ENCODE measurements at regions of chr7 and their contacts with region 1.

Region 1: GRCh38 chr7:30276203-30276900 is 8.0 kb upstream of the ZNRF2 start:
- DNase-seq: no peak
- ATAC-seq: peak; percentile 46
- H3K4me3 ChIP-seq: no peak overlapping the region
- H3K27ac ChIP-seq: no peak overlapping the region
- H3K4me1 ChIP-seq: no peaks in the 10 kb centered on the region
- H3K27me3 ChIP-seq: no peaks in the 10 kb centered on the region

Region 2: GRCh38 chr7:30252885-30253795 is 23.2 kb before region 1 on chr7:
- intact Hi-C with region 1: no loop called
- DNase-seq: peak; percentile 78 to 87
- ATAC-seq: peak; percentile 42
- H3K4me3 ChIP-seq: no peak overlapping the region
- H3K27ac ChIP-seq: no peak overlapping the region
- H3K4me1 ChIP-seq: peaks cover 0 to 3% of the 10 kb centered on the region in 2 donors
- H3K27me3 ChIP-seq: no peaks in the 10 kb centered on the region

Region 3: GRCh38 chr7:30412810-30413504 is 136.6 kb after region 1 on chr7:
- intact Hi-C with region 1: loop called in 1 of 2 experiments (anchors 5 kb)
- DNase-seq: no peak
- ATAC-seq: peak; percentile 83
- H3K4me3 ChIP-seq: no peak overlapping the region
- H3K27ac ChIP-seq: no peak overlapping the region
- H3K4me1 ChIP-seq: no peaks in the 10 kb centered on the region
- H3K27me3 ChIP-seq: no peaks in the 10 kb centered on the region

Region 4: DNA sequence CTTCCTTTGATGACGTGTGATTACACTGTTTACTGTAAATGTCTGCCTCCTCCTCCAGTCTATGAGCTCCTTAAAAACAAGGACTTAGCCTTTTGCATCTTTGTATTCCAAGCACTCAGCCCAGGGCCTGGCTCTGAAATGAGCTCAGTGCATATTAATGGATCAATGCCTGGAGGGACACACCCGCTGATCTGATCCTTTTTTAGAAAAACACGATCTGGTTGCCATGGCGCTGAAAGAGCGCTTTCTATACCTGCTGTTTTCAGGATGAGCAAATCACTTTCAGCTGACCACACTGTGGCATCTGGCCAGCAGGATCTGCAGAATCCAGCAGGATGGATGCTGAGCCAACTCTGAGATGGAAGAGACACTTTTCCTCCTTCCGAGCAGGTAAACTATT is 280.5 kb after region 1 on chr7:
- intact Hi-C with region 1: loop called (anchors 2 to 10 kb)
- DNase-seq: no peak
- ATAC-seq: no peak
- H3K4me3 ChIP-seq: no peak overlapping the region
- H3K27ac ChIP-seq: no peak overlapping the region
- H3K4me1 ChIP-seq: no peaks in the 10 kb centered on the region
- H3K27me3 ChIP-seq: no peaks in the 10 kb centered on the region